ENCODE measurements at regions of chr22 and their contacts with region 1.

Region 1: GRCh38 chr22:30326706-30327362 is at the start of gene TBC1D10A:
- DNase-seq: peak; percentile 96
- H3K4me3 ChIP-seq: peak within 1 kb of the TSS; percentile 86 to 98
- H3K27ac ChIP-seq: peak within 1 kb of the TSS; percentile 92 to 94
- H3K4me1 ChIP-seq: peaks cover 5% of the 10 kb centered on the region
- H3K27me3 ChIP-seq: no peaks in the 10 kb centered on the region
- CTCF ChIP-seq: peak in 1 of 4 experiments; percentile 16
- POLR2A ChIP-seq: peak; percentile 97
- total RNA-seq, gene TBC1D10A: 46.1 to 51.2 TPM

Region 2: GRCh38 chr22:30356449-30357235 is 29.8 kb after region 1 on chr22 and contains the starts of genes CCDC157 and SF3A1:
- intact Hi-C with region 1: loop called (anchors 2 kb)
- DNase-seq: peak; percentile 85
- H3K4me3 ChIP-seq: peak within 1 kb of the TSS; percentile 58 to 68
- H3K27ac ChIP-seq: peak within 1 kb of the TSS; percentile 93
- H3K4me1 ChIP-seq: peaks cover 10% of the 10 kb centered on the region
- H3K27me3 ChIP-seq: no peaks in the 10 kb centered on the region
- CTCF ChIP-seq: peak in 2 of 4 experiments; percentile 29
- POLR2A ChIP-seq: peak; percentile 85
- total RNA-seq, gene CCDC157: 3.5 to 28.6 TPM
- total RNA-seq, gene SF3A1: 108 to 134 TPM

Measured in prostate gland (tissue), 2 donors.